ENCODE measurements at regions of chr2 and their contacts with region 1.

Region 1: GRCh38 chr2:191748059-191748461 is 70.1 kb downstream of the NABP1 start:
- DNase-seq: no peak
- ATAC-seq: no peak
- H3K4me3 ChIP-seq: no peak overlapping the region
- H3K27ac ChIP-seq: no peak overlapping the region
- H3K4me1 ChIP-seq: peaks cover 0 to 23% of the 10 kb centered on the region in 2 experiments; a peak in 2 of 4 replicates
- H3K27me3 ChIP-seq: no peaks in the 10 kb centered on the region
- CTCF ChIP-seq: no peak
- POLR2A ChIP-seq: no peak
- RAD21 ChIP-seq: no peak

Region 2: DNA sequence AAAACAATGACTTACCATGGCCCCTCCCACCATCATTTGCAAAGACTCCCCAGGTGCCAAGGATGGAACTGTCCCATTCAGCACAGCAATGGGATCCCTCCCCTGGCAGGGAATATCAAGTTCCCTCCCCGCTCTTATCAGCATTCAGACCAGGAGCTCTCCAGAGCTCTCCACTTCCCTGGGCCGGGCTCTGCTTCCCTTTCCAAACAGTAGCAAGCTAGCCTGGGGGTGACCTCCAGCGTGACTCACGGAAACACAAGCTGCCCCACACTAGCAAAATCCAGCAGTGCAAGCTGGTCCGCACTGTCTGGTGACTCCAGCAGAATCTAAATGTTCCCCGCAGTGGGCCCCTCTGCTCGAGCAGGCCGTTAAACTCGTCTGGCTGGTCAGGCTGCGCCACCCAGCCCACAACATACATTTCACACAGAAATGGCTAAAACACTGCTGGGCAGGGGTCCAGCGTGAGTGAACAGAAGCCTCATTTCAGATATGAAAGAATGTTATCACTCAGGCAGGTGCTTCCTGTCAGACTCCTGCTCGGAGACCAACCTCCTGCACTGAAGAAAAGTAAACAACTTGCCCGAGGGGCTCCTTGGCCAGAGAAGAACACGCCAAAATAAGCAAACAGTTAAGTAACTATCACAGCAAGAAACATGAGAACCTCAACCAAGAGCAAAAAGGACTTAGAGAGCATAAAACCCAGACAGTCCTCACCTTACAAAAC is 768.0 kb before region 1 on chr2:
- CTCF ChIA-PET with region 1: no interaction called
- POLR2A ChIA-PET with region 1: no interaction called
- RAD21 ChIA-PET with region 1: no interaction called
- intact Hi-C with region 1: no loop called
- DNase-seq: no peak
- ATAC-seq: no peak
- H3K4me3 ChIP-seq: no peak overlapping the region
- H3K27ac ChIP-seq: no peak overlapping the region
- H3K4me1 ChIP-seq: no peaks in the 10 kb centered on the region
- H3K27me3 ChIP-seq: no peaks in the 10 kb centered on the region
- CTCF ChIP-seq: no peak
- POLR2A ChIP-seq: no peak
- RAD21 ChIP-seq: no peak

Region 3: GRCh38 chr2:191758518-191759507 is 10.8 kb after region 1 on chr2:
- CTCF ChIA-PET with region 1: interaction called, 15 read pairs
- POLR2A ChIA-PET with region 1: interaction called, 5 read pairs
- RAD21 ChIA-PET with region 1: no interaction called
- intact Hi-C with region 1: no loop called
- DNase-seq: peak; percentile 76
- ATAC-seq: peak; percentile 98
- H3K4me3 ChIP-seq: peak overlapping the region; percentile 39 to 55
- H3K27ac ChIP-seq: peak overlapping the region; percentile 36
- H3K4me1 ChIP-seq: peaks cover 3 to 12% of the 10 kb centered on the region in 2 experiments; a peak in 3 of 4 replicates
- H3K27me3 ChIP-seq: no peaks in the 10 kb centered on the region
- CTCF ChIP-seq: peak; percentile 48 to 85 (median 80); a peak in 5 of 6 replicates
- POLR2A ChIP-seq: peak; percentile 9
- RAD21 ChIP-seq: peak; percentile 53; the same call in 1 of the 2 replicates

Region 4: GRCh38 chr2:191983186-191983585 is 235.1 kb after region 1 on chr2:
- CTCF ChIA-PET with region 1: no interaction called
- POLR2A ChIA-PET with region 1: no interaction called
- RAD21 ChIA-PET with region 1: no interaction called
- intact Hi-C with region 1: no loop called
- DNase-seq: no peak
- ATAC-seq: no peak
- H3K4me3 ChIP-seq: no peak overlapping the region
- H3K27ac ChIP-seq: no peak overlapping the region
- H3K4me1 ChIP-seq: no peaks in the 10 kb centered on the region
- H3K27me3 ChIP-seq: no peaks in the 10 kb centered on the region
- CTCF ChIP-seq: no peak
- POLR2A ChIP-seq: no peak
- RAD21 ChIP-seq: no peak